Ascending aorta (tissue), 2 donors: ENCODE measurements at regions of chr11 and their contacts with region 1.

Region 1: DNA sequence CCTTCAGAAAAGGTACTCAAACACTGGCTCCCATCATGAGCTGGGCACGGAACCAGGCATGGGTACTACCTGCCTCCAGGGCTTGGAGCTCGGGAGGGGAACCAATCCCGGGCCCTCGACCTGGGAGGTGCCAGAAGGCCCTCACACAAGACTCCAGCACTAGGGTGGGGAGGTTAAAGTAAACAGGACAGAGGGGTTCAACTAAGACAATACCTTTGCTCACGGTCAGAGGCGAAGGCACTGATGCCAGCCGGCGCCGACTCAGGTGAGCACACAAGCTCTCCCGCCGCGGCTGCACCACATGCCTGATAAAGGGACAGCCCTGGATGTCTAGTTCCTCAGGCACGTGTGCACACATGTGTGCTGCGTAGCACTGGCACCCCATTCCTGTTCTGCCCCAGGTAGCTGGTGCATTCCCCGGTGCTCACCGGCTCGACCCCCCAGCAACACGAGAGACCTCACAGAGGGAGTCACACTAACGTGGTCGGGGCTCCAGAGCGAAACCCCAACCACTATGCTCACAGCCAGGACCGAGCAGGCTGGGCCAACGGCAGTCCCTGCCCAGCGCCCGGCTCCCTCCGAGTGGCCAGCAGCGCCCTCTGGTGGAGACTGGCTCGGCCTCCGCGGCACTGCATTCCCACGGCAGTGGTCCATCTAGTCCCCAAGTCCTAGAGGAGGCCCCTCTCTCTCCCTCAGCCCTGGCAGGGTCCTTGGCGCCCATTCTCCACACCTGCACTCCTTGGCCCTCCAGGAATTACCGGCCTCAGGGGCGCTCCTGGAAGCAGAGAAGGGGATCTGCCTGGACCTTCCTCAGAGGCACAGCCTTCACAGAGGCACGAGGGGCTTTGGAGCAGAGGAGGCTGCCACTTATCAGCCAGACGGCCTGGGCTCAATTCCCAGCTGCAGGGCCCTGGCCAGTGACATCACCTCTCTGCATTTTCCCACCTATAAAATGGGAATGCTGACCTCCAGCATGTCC is 28.8 kb upstream of the MOB2 start:
- DNase-seq: peak in 1 of 2 donors; percentile 86
- H3K4me3 ChIP-seq: peak overlapping the region in 1 of 2 donors; percentile 40
- H3K27ac ChIP-seq: no peak overlapping the region
- H3K4me1 ChIP-seq: peaks cover 11 to 21% of the 10 kb centered on the region in 2 donors
- H3K27me3 ChIP-seq: no peaks in the 10 kb centered on the region
- CTCF ChIP-seq: peak; percentile 91 to 99 (median 95)

Region 2: GRCh38 chr11:1202776-1203504 is 312.4 kb before region 1 on chr11:
- intact Hi-C with region 1: loop called (anchors 1 kb)
- DNase-seq: peak in 1 of 2 donors; percentile 68
- H3K4me3 ChIP-seq: no peak overlapping the region
- H3K27ac ChIP-seq: no peak overlapping the region
- H3K4me1 ChIP-seq: no peaks in the 10 kb centered on the region
- H3K27me3 ChIP-seq: no peaks in the 10 kb centered on the region
- CTCF ChIP-seq: peak; percentile 86 to 96 (median 87)

Region 3: DNA sequence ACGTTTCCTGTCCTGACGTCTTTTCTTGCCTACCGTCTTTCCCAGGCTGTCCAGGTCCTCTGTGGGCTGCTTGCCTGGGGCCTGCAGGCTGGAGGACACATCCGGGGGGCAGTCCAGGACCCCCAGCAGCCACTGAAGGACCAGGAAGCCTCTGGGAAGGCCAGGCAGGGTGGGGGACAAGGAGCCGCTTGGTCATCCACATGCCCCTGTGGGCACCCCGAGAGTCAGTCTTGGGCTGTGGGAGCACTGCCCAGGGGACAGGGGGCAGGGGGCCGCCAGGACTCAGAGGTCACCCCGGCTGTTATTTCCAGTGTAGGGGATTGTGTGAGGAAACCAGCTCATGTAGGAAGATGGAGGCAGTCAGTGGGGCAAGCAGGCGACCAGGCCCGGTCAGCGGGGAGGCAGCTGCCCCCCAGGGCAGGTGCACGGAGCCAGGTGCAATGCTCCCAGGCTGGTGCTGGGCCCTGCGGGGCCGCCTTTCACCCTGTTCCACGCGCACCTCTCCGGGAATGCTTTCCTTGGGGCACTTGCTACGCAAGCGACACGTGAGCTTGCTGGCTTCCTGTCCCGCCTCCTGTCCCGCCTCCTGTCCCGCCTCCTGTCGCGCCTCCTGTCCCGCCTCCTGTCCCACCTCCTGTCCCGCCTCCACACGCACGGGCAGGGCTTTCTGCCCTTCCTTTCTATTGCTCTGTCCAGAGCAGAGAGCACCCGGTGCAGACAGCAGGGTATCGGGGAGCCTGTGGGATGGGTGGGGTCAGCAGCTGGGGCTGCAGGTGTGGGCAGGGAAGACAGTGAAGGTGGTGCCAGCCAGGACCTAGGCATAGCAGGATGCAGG is 253.0 kb before region 1 on chr11:
- intact Hi-C with region 1: loop called (anchors 5 kb)
- DNase-seq: peak; percentile 67 to 94
- H3K4me3 ChIP-seq: peak overlapping the region; percentile 44 to 67
- H3K27ac ChIP-seq: peak overlapping the region; percentile 62 to 83
- H3K4me1 ChIP-seq: peaks cover 6 to 12% of the 10 kb centered on the region in 2 donors
- H3K27me3 ChIP-seq: no peaks in the 10 kb centered on the region
- CTCF ChIP-seq: no peak

Region 4: GRCh38 chr11:1309498-1310317 is 205.7 kb before region 1 on chr11 and contains the start of gene TOLLIP:
- intact Hi-C with region 1: loop called (anchors 2 kb)
- DNase-seq: peak; percentile 80 to 97
- H3K4me3 ChIP-seq: peak within 1 kb of the TSS; percentile 98 to 99
- H3K27ac ChIP-seq: peak within 1 kb of the TSS; percentile 91 to 92
- H3K4me1 ChIP-seq: peaks cover 15 to 25% of the 10 kb centered on the region in 2 donors
- H3K27me3 ChIP-seq: no peaks in the 10 kb centered on the region
- CTCF ChIP-seq: peak in 2 of 3 experiments; percentile 14 to 49
- total RNA-seq, gene TOLLIP: 63.0 TPM

Region 5: DNA sequence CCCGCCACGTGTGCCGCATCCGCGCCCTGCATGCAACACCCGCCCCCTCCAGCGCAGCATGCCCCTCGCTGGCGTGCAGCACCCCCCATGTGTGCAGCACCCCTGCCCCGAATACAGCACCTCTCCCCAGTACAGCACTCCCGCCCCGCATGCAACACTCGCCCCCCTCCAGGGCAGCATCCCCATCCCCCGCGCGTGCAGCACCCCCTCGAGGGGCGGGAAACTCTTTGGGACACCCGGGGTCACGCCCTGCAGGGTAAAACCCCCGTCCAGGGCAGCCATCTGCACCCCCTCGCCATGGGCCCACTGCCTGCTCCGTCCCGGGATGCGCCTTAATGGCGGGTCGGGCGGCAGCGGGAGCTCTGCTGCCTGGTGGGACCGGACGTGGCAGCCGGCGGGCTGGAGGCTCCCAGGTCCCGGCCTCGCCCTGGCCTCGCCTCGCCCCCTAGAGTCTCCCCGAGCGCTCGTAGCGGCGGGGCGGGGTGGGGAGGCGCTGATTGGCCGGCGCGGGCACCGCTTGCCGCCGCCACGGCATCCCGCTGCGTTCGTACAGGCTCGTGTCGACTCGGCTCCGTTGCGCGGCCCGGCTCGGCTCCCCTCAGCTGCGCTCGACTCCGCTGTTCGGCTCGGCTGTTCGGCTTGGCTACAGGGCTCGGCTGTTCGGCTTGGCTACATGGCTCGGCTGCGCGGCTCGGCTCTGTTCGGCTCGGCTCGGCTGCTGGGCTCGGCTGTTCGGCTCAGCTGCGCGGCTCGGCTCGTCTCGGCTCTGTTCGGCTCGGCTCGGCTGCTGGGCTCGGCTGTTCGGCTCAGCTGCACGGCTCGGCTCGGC is 126.1 kb before region 1 on chr11:
- intact Hi-C with region 1: loop called (anchors 2 kb)
- DNase-seq: peak; percentile 81 to 98
- H3K4me3 ChIP-seq: peak overlapping the region; percentile 59 to 66
- H3K27ac ChIP-seq: peak overlapping the region; percentile 37 to 50
- H3K4me1 ChIP-seq: peaks cover 4 to 11% of the 10 kb centered on the region in 2 donors
- H3K27me3 ChIP-seq: peaks cover 24% of the 10 kb centered on the region
- CTCF ChIP-seq: peak in 2 of 3 experiments; percentile 10 to 33

Region 6: DNA sequence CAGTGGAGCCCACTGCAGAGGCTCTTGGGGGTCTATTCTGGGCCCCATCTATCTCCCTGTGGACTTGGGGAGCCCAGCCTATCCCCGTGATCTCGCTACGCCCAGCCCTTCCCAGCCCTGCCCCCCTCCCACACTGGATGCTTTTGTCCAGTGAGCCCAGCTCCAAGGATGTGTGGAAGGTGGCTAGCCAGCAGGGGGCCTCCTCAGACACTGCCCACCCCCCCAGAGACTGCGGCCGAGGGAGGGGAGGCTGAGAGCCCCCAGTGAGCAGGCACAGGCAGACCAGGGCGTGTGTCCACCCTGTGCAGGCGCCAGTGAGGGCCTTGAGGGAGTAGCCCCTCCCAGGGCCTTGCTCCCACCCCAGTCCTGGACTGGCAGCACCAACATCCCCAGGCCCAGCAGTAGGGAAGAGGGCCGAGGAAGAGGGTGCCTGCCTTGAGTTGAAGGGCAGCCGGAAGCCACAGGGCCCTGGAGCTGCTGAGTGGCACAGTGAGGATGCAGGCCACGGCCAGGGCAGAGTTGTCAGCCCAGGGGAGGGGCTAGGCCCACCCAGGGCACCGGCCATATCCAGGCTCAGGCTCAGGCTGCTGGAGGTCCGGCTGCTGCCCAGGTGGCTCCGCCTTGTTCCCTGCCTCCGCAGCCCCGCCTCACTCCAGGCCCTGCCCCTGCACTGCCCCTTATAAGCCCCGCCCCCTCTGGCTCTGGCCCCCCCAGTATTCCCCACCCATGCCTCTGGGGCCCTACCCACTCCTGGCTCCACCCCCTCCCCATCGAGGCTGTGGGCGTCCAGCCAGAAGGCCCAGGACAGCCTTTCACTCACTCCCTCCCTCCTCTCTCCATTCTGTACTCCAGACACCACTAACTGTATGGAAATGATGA is 56.8 kb before region 1 on chr11:
- intact Hi-C with region 1: loop called (anchors 1 kb)
- DNase-seq: peak in 1 of 2 donors; percentile 86
- H3K4me3 ChIP-seq: no peak overlapping the region
- H3K27ac ChIP-seq: peak overlapping the region; percentile 86 to 89
- H3K4me1 ChIP-seq: peaks cover 14 to 28% of the 10 kb centered on the region in 2 donors
- H3K27me3 ChIP-seq: no peaks in the 10 kb centered on the region
- CTCF ChIP-seq: peak; percentile 15 to 41 (median 32)

Region 7: GRCh38 chr11:1482581-1483444 is 32.6 kb before region 1 on chr11:
- intact Hi-C with region 1: loop called (anchors 2 kb)
- DNase-seq: peak; percentile 30 to 83
- H3K4me3 ChIP-seq: peak overlapping the region in 1 of 2 donors; percentile 62
- H3K27ac ChIP-seq: peak overlapping the region; percentile 87 to 98
- H3K4me1 ChIP-seq: peaks cover 50 to 83% of the 10 kb centered on the region in 2 donors
- H3K27me3 ChIP-seq: no peaks in the 10 kb centered on the region
- CTCF ChIP-seq: peak; percentile 22 to 46 (median 31)

Region 8: GRCh38 chr11:1772270-1773130 is 257.1 kb after region 1 on chr11:
- intact Hi-C with region 1: no loop called
- DNase-seq: peak in 1 of 2 donors; percentile 83
- H3K4me3 ChIP-seq: peak overlapping the region in 1 of 2 donors; percentile 5
- H3K27ac ChIP-seq: no peak overlapping the region
- H3K4me1 ChIP-seq: peaks cover 0 to 8% of the 10 kb centered on the region in 2 donors
- H3K27me3 ChIP-seq: no peaks in the 10 kb centered on the region
- CTCF ChIP-seq: no peak